GM12878 (cell line): ENCODE measurements at regions of chr2 and their contacts with region 1.

Region 1: DNA sequence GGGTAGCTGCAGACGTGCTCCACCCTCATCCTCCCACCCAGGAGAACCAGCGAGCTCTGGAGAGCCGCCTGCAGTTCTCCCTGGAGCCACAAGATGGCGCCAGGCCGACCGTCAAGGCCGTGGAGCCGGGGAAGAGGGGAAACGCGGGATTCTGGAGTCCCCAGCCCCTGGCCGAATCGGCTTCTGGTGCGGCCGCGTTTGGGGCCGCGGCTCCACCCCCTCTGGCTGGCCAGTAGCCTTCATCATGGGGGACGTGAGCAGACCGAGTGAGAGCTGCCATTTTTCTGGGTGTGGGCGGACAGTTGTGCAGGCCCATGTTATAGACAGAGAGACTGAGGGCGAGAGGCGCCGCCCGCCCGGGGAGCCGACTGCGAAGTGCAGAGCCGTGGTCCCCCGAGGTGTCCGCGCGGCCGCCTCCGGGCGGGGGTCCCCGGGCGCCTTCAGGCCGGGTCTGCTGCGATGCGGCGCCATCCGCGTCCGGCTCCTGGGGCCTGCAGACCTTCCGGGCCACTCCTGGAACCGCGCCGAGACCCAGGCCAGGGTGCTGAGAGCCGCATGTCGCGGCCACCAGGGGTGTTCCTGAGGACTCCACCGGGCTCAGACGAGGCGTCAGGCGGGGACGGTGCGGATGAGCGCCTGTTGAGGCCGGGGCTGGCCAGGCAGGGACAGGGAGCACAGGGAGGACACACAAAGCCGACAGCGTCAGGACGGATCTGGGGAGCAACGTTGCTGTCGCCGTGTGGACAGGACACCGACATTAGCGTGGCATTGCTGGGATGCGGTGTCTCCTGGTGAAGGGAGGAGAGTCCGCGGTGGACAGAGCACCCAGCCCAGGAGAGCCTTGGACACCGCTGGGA is 418.2 kb upstream of the HS6ST1 start:
- DNase-seq: no peak
- ATAC-seq: peak; percentile 71
- H3K4me3 ChIP-seq: no peak overlapping the region
- H3K27ac ChIP-seq: no peak overlapping the region
- H3K4me1 ChIP-seq: peaks cover 3% of the 10 kb centered on the region; the same call in 1 of the 2 replicates
- H3K27me3 ChIP-seq: peaks cover 0 to 1% of the 10 kb centered on the region in 2 experiments; a peak in 1 of 4 replicates
- CTCF ChIP-seq: peak; percentile 88 to 99 (median 97)
- EP300 ChIP-seq: no peak
- POLR2A ChIP-seq: no peak
- RAD21 ChIP-seq: peak; percentile 86

Region 2: GRCh38 chr2:128321784-128322714 is 414.9 kb before region 1 on chr2:
- CTCF ChIA-PET with region 1: no interaction called
- POLR2A ChIA-PET with region 1: no interaction called
- RAD21 ChIA-PET with region 1: no interaction called
- SMC1A ChIA-PET with region 1: no interaction called
- in situ Hi-C with region 1: no loop called
- intact Hi-C with region 1: loop called (anchors 10 kb)
- DNase-seq: no peak
- ATAC-seq: peak; percentile 71
- H3K4me3 ChIP-seq: peak overlapping the region; percentile 70; the same call in 1 of the 2 replicates
- H3K27ac ChIP-seq: peak overlapping the region; percentile 18; the same call in 1 of the 2 replicates
- H3K4me1 ChIP-seq: peaks cover 3% of the 10 kb centered on the region
- H3K27me3 ChIP-seq: no peaks in the 10 kb centered on the region; a peak in 1 of 4 replicates
- CTCF ChIP-seq: peak; percentile 73 to 93 (median 93); a peak in 5 of 6 replicates
- EP300 ChIP-seq: no peak
- POLR2A ChIP-seq: peak; percentile 70
- RAD21 ChIP-seq: peak; percentile 67

Region 3: GRCh38 chr2:128750328-128751165 is 13.6 kb after region 1 on chr2:
- CTCF ChIA-PET with region 1: interaction called, 16 read pairs
- POLR2A ChIA-PET with region 1: no interaction called
- RAD21 ChIA-PET with region 1: interaction called, 4 read pairs
- SMC1A ChIA-PET with region 1: interaction called, 3 read pairs
- in situ Hi-C with region 1: no loop called
- intact Hi-C with region 1: no loop called
- DNase-seq: no peak
- ATAC-seq: no peak
- H3K4me3 ChIP-seq: no peak overlapping the region
- H3K27ac ChIP-seq: no peak overlapping the region
- H3K4me1 ChIP-seq: peaks cover 12% of the 10 kb centered on the region
- H3K27me3 ChIP-seq: no peaks in the 10 kb centered on the region
- CTCF ChIP-seq: no peak
- EP300 ChIP-seq: no peak
- POLR2A ChIP-seq: no peak
- RAD21 ChIP-seq: no peak

Region 4: DNA sequence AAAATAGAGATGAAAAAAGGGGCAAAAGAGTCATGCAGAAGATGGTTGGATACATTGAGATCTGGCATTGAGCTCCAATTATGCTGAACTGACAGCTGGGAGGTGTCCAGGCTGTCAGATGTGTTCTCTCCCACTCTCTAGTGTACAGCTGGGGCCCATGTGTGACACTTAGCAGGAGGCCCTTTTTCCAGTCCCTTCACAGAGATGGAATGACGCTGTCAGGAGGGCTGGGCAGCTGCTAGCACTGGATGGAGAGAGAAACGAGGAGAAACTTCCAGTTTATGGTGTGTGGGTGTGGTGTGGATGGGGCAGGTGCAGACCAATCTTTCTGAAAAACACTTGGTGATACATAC is 19.4 kb after region 1 on chr2:
- CTCF ChIA-PET with region 1: interaction called, 16 read pairs
- POLR2A ChIA-PET with region 1: no interaction called
- RAD21 ChIA-PET with region 1: interaction called, 4 read pairs
- SMC1A ChIA-PET with region 1: interaction called, 5 read pairs
- in situ Hi-C with region 1: no loop called
- intact Hi-C with region 1: no loop called
- DNase-seq: no peak
- ATAC-seq: peak; percentile 8; the same call in 1 of the 3 replicates
- H3K4me3 ChIP-seq: no peak overlapping the region
- H3K27ac ChIP-seq: no peak overlapping the region
- H3K4me1 ChIP-seq: peaks cover 12% of the 10 kb centered on the region
- H3K27me3 ChIP-seq: no peaks in the 10 kb centered on the region
- CTCF ChIP-seq: no peak
- EP300 ChIP-seq: no peak
- POLR2A ChIP-seq: no peak
- RAD21 ChIP-seq: no peak

Region 5: GRCh38 chr2:129233751-129234406 is 497.0 kb after region 1 on chr2:
- CTCF ChIA-PET with region 1: no interaction called
- POLR2A ChIA-PET with region 1: no interaction called
- RAD21 ChIA-PET with region 1: interaction called, 3 read pairs
- SMC1A ChIA-PET with region 1: no interaction called
- in situ Hi-C with region 1: no loop called
- intact Hi-C with region 1: loop called (anchors 5 kb)
- DNase-seq: no peak
- ATAC-seq: peak; percentile 82
- H3K4me3 ChIP-seq: no peak overlapping the region
- H3K27ac ChIP-seq: no peak overlapping the region
- H3K4me1 ChIP-seq: no peaks in the 10 kb centered on the region
- H3K27me3 ChIP-seq: no peaks in the 10 kb centered on the region; a peak in 1 of 4 replicates
- CTCF ChIP-seq: peak; percentile 1 to 29 (median 25); a peak in 3 of 6 replicates
- EP300 ChIP-seq: no peak
- POLR2A ChIP-seq: no peak
- RAD21 ChIP-seq: peak; percentile 69

Region 6: DNA sequence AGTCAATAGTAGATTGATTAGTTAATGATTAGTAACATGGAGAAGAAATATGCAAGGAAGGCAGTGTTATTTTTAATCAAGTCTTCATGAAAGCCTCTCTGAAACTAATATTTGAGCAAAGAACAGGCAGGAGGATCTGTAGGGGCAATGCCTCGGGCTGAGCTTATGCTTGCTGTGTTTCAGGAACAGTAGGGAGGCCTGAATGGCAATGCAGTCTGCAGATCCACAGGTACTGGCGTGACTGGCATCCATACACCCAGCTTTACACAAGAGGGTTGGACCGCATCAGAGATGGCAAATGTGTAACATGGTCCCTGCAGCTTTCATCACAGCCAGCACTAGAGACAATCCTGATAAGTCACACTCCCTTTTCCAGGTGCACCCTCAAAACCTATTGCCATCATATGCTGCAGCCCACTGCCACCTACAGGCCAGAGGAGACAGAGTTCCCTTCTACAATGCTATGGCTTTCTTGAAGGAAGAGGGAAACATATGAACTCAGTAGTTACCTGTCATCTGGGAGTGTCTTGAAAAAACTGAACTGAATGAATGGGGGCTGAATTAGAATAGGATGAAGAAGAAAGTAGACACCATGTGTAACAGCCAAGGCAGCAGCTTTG is 660.2 kb after region 1 on chr2:
- CTCF ChIA-PET with region 1: interaction called, 4 read pairs
- POLR2A ChIA-PET with region 1: no interaction called
- RAD21 ChIA-PET with region 1: interaction called, 5 read pairs
- SMC1A ChIA-PET with region 1: no interaction called
- in situ Hi-C with region 1: loop called (anchors 5 kb)
- intact Hi-C with region 1: loop called (anchors 1 kb)
- DNase-seq: peak; percentile 21
- ATAC-seq: peak; percentile 94
- H3K4me3 ChIP-seq: no peak overlapping the region
- H3K27ac ChIP-seq: no peak overlapping the region
- H3K4me1 ChIP-seq: no peaks in the 10 kb centered on the region; the same call in 1 of the 2 replicates
- H3K27me3 ChIP-seq: no peaks in the 10 kb centered on the region
- CTCF ChIP-seq: peak; percentile 78 to 87 (median 81)
- EP300 ChIP-seq: no peak
- POLR2A ChIP-seq: no peak
- RAD21 ChIP-seq: peak; percentile 94

Region 7: GRCh38 chr2:129849559-129850160 is 1112.7 kb after region 1 on chr2:
- CTCF ChIA-PET with region 1: no interaction called
- POLR2A ChIA-PET with region 1: no interaction called
- RAD21 ChIA-PET with region 1: no interaction called
- SMC1A ChIA-PET with region 1: no interaction called
- in situ Hi-C with region 1: loop called (anchors 10 kb)
- intact Hi-C with region 1: loop called (anchors 1 kb)
- DNase-seq: peak; percentile 40
- ATAC-seq: peak; percentile 89
- H3K4me3 ChIP-seq: no peak overlapping the region
- H3K27ac ChIP-seq: no peak overlapping the region
- H3K4me1 ChIP-seq: no peaks in the 10 kb centered on the region
- H3K27me3 ChIP-seq: peaks cover 0 to 2% of the 10 kb centered on the region in 2 experiments; a peak in 1 of 4 replicates
- CTCF ChIP-seq: peak; percentile 49 to 75 (median 68); a peak in 5 of 6 replicates
- EP300 ChIP-seq: no peak
- POLR2A ChIP-seq: no peak
- RAD21 ChIP-seq: peak; percentile 67